IMR-90 (cell line): ENCODE measurements at regions of chr13 and their contacts with region 1.

Region 1: DNA sequence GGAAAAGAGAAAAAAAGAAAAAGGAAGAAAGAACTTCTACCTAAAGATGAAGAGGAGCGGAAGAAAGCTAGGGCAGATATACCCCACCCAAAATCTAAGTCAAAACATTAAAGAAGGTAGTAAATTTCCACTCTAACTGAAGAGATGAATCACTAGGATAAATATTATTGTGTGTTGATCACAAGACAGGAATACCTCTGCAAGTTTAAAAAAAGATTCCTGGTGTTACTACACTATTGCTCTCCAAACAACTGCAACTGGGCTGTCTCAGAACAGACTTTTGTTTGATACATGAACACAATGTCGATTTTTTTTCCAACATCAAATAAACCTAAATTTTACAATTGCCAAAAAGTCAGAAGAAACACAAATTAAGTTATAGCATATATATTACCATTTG is 6.8 kb downstream of the HSPH1 start:
- DNase-seq: peak; percentile 65
- ATAC-seq: peak; percentile 71
- H3K4me3 ChIP-seq: no peak overlapping the region
- H3K27ac ChIP-seq: no peak overlapping the region
- H3K4me1 ChIP-seq: no peaks in the 10 kb centered on the region; the same call in 1 of the 2 replicates
- H3K27me3 ChIP-seq: no peaks in the 10 kb centered on the region
- CTCF ChIP-seq: no peak
- POLR2A ChIP-seq: no peak
- RAD21 ChIP-seq: no peak

Region 2: GRCh38 chr13:31138515-31138914 is 16.4 kb before region 1 on chr13:
- CTCF ChIA-PET with region 1: interaction called, 4 read pairs
- POLR2A ChIA-PET with region 1: no interaction called
- dilution Hi-C with region 1: no loop called
- in situ Hi-C with region 1: no loop called
- intact Hi-C with region 1: loop called (anchors 2 kb)
- DNase-seq: no peak
- ATAC-seq: no peak
- H3K4me3 ChIP-seq: no peak overlapping the region
- H3K27ac ChIP-seq: no peak overlapping the region
- H3K4me1 ChIP-seq: no peaks in the 10 kb centered on the region
- H3K27me3 ChIP-seq: no peaks in the 10 kb centered on the region
- CTCF ChIP-seq: no peak
- POLR2A ChIP-seq: no peak
- RAD21 ChIP-seq: no peak